ENCODE measurements at regions of chr3 and their contacts with region 1.

Region 1: GRCh38 chr3:109607897-109608296 is 270.6 kb upstream of the DPPA4 start:
- DNase-seq: no peak
- H3K4me3 ChIP-seq: no peak overlapping the region
- H3K27ac ChIP-seq: no peak overlapping the region
- H3K27me3 ChIP-seq: peaks cover 0 to 4% (median 0%) of the 10 kb centered on the region in 45 donors
- CTCF ChIP-seq: no peak

Region 2: GRCh38 chr3:109863701-109864100 is 255.8 kb after region 1 on chr3:
- intact Hi-C with region 1: loop called in 1 of 2 experiments (anchors 5 kb)
- DNase-seq: no peak
- H3K4me3 ChIP-seq: no peak overlapping the region
- H3K27ac ChIP-seq: no peak overlapping the region
- H3K27me3 ChIP-seq: no peaks in the 10 kb centered on the region
- CTCF ChIP-seq: no peak

Measured in dorsolateral prefrontal cortex (tissue), 120 donors.